ENCODE measurements at regions of chr12 and their contacts with region 1.

Region 1: GRCh38 chr12:49967042-49967776 is 5.5 kb downstream of the AQP5 start:
- DNase-seq: peak; percentile 91

Region 2: DNA sequence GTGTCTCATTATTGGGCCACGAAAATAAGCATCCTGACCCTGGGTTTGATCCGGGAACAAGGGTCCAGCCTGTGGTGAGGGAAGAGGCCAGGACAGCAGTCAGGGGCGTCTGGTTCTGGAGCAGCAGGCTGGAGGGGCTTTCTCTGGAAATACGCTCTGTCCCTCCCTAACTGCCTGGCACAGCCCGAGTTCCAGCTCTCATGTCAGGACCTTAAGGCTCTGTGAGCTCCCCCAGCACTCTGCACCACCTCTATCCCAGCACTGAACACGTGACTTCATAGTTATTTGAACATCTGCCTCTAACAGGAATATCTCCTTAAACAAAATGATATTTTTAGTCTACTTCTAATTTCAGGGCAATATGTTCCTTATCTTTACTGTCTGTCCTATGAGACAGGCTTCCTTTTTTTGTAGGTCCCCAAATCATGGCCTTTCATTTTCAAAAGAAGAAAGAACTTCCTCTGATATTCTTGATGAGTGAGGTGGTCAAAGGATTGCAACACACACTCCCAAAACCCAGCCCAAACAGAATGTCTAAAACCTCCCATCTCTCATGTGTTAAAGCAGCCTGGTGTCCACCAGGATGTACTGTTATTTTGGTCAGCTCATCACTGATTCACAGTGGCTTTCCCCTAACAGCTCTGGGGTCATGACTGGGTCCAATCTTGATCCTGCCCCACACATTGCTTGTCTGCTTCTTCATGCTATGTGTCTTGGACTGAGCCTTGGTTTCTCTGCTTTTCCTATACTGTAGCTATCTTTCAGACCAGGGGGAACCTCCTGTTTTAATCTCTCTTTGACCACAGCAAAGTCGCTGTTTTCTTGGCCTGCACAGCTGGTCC is 15.3 kb after region 1 on chr12:
- CTCF ChIA-PET with region 1: interaction called, 22 read pairs
- POLR2A ChIA-PET with region 1: no interaction called
- DNase-seq: no peak

Region 3: GRCh38 chr12:50055831-50056638 is 88.8 kb after region 1 on chr12:
- CTCF ChIA-PET with region 1: interaction called, 24 read pairs
- POLR2A ChIA-PET with region 1: no interaction called
- DNase-seq: peak; percentile 65

Region 4: DNA sequence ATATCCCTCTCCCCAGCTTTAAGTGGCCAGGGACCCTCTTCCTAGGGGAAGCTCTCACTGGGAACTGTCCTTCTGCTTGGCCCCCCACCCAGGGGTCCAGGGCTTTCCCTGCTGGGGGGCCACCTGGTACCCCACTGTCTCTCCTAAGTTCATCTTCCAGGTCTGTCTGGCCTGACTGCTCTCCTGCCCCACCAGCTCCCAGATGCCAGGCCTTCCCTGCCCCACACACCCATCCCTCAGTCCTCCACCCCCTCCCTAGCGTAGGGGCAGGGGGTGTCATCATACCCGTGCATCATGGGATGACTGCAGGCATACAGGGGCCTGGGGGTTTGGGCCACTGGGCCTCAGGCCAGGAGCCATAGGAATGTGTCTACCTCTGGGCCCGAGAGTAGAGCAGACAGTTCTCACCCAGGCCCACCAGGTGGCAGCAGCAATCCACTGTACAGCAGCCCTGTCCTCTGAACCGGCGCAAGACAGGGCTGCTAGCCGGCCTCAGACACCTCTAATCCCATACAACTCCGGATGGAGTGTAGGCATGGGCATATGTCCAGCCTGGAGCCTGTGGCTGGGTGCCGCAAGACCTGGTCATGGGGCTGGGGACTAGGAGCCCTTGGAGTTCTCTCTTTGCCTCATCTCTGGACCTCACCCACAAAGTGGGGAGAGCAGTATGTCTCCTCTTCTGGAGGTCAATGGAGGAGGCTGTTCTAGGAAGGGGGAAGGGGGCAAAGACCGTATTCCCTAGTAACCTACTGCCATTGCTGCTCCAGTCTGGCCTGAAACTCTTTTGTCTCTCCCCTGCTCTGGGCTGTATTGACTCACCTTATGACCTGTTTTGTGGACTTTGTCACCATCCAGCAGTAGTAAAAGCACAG is 108.0 kb after region 1 on chr12:
- CTCF ChIA-PET with region 1: interaction called, 32 read pairs
- POLR2A ChIA-PET with region 1: interaction called, 3 read pairs
- DNase-seq: peak; percentile 85

Measured in HEK293T (cell line).